PC-9 (cell line): ENCODE measurements at regions of chr1 and their contacts with region 1.

Region 1: GRCh38 chr1:155396874-155397476 is 76.3 kb downstream of the RUSC1 start:
- DNase-seq: peak in 1 of 2 experiments; percentile 29
- H3K4me3 ChIP-seq: no peak overlapping the region
- H3K27ac ChIP-seq: no peak overlapping the region
- H3K4me1 ChIP-seq: no peaks in the 10 kb centered on the region; the same call in 1 of the 2 replicates
- H3K27me3 ChIP-seq: no peaks in the 10 kb centered on the region
- CTCF ChIP-seq: no peak

Region 2: GRCh38 chr1:154884869-154885701 is 511.9 kb before region 1 on chr1:
- CTCF ChIA-PET with region 1: no interaction called
- POLR2A ChIA-PET with region 1: no interaction called
- intact Hi-C with region 1: no loop called
- DNase-seq: no peak
- H3K4me3 ChIP-seq: no peak overlapping the region
- H3K27ac ChIP-seq: no peak overlapping the region
- H3K4me1 ChIP-seq: no peaks in the 10 kb centered on the region
- H3K27me3 ChIP-seq: peaks cover 92% of the 10 kb centered on the region
- CTCF ChIP-seq: no peak

Region 3: GRCh38 chr1:155038602-155039307 is 358.2 kb before region 1 on chr1:
- CTCF ChIA-PET with region 1: no interaction called
- POLR2A ChIA-PET with region 1: interaction called, 11 read pairs
- intact Hi-C with region 1: no loop called
- DNase-seq: peak; percentile 71 to 86
- H3K4me3 ChIP-seq: peak overlapping the region; percentile 11; the same call in 1 of the 2 replicates
- H3K27ac ChIP-seq: peak overlapping the region; percentile 53
- H3K4me1 ChIP-seq: peaks cover 28% of the 10 kb centered on the region
- H3K27me3 ChIP-seq: no peaks in the 10 kb centered on the region
- CTCF ChIP-seq: no peak

Region 4: DNA sequence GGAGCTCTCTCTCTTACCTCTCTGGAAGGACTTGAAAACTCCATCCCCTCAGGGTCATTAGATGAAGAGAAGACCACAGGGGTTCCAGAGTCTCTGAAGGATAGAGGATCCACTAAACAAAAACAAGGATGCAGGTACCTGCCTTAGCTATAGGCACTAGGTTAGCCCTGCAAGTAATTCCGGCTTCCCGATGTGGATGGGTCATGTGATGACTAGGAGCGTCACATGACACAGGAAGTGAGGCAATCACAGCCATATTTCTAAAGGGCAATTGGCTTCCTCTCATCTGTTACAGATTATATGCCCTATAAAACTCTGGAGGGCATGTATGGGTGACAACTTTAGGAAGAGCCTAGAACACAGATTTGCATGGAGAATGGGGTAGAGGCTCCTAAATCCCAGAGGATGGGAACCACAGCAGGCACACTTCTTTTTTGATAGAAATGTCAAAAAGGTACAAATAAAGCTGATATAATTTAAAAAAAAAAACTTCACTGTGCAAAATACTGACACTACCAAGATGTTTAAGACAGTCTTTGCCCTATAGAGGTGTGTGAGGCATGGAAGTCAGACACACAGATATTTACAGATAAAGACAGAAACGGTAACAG is 155.8 kb before region 1 on chr1:
- CTCF ChIA-PET with region 1: no interaction called
- POLR2A ChIA-PET with region 1: no interaction called
- intact Hi-C with region 1: no loop called
- DNase-seq: peak; percentile 51 to 76
- H3K4me3 ChIP-seq: peak overlapping the region; percentile 61; the same call in 1 of the 2 replicates
- H3K27ac ChIP-seq: peak overlapping the region; percentile 29; the same call in 1 of the 2 replicates
- H3K4me1 ChIP-seq: peaks cover 26% of the 10 kb centered on the region
- H3K27me3 ChIP-seq: no peaks in the 10 kb centered on the region
- CTCF ChIP-seq: no peak

Region 5: DNA sequence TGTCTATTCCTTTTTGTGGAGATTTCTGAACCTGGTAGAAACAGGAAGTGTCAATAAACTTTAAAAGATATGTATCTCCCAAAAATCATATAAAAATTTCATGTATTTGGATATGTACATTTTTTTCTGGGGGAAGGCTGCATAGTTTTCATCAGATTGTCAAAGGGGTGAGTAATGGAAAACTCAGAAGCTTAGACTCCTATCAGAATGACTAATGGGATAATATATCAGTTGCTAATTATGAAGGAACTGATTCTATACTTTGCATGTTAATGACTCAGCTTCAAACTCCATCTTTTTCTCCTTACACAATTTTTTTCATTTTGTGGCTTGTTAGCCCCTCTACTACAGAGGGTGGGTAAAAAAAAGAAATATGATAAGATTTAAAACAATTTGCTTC is 404.2 kb after region 1 on chr1:
- CTCF ChIA-PET with region 1: no interaction called
- POLR2A ChIA-PET with region 1: no interaction called
- intact Hi-C with region 1: no loop called
- DNase-seq: no peak
- H3K4me3 ChIP-seq: no peak overlapping the region
- H3K27ac ChIP-seq: no peak overlapping the region
- H3K4me1 ChIP-seq: no peaks in the 10 kb centered on the region
- H3K27me3 ChIP-seq: no peaks in the 10 kb centered on the region
- CTCF ChIP-seq: no peak